ENCODE measurements at regions of chr12 and their contacts with region 1.

Region 1: GRCh38 chr12:22529281-22530060 is 14.9 kb downstream of the C2CD5 start:
- DNase-seq: no peak
- ATAC-seq: peak; percentile 90
- H3K4me3 ChIP-seq: no peak overlapping the region
- H3K27ac ChIP-seq: no peak overlapping the region
- H3K4me1 ChIP-seq: no peaks in the 10 kb centered on the region
- H3K27me3 ChIP-seq: no peaks in the 10 kb centered on the region
- CTCF ChIP-seq: peak; percentile 38 to 53 (median 45); a peak in 4 of 6 replicates
- EP300 ChIP-seq: no peak
- POLR2A ChIP-seq: no peak
- RAD21 ChIP-seq: peak; percentile 30; the same call in 1 of the 2 replicates

Region 2: DNA sequence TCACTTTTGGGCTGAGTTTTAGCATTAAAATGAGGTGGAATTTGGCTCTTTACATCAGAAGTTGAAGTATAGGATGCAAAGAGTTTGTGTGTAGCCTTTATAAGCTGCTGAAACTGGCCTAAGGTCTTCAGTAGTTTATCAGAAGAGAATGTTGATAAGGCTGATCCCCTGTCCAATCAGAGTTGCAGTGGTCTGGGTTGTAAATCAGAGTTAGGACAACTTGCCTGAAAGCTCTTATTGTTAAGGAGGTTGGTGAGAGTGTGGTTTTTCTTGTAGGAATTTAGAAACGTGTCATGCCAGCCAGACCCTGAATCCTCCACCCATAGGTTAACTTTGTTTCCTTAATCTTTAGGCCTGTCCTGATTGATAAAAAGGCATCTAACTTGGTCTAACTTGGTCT is 338.5 kb before region 1 on chr12:
- CTCF ChIA-PET with region 1: no interaction called
- POLR2A ChIA-PET with region 1: no interaction called
- RAD21 ChIA-PET with region 1: no interaction called
- SMC1A ChIA-PET with region 1: no interaction called
- in situ Hi-C with region 1: no loop called
- intact Hi-C with region 1: no loop called
- DNase-seq: no peak
- ATAC-seq: no peak
- H3K4me3 ChIP-seq: no peak overlapping the region
- H3K27ac ChIP-seq: no peak overlapping the region
- H3K4me1 ChIP-seq: no peaks in the 10 kb centered on the region
- H3K27me3 ChIP-seq: no peaks in the 10 kb centered on the region
- CTCF ChIP-seq: no peak
- EP300 ChIP-seq: no peak
- POLR2A ChIP-seq: no peak
- RAD21 ChIP-seq: no peak

Region 3: GRCh38 chr12:22230280-22230794 is 299.1 kb before region 1 on chr12:
- CTCF ChIA-PET with region 1: no interaction called
- POLR2A ChIA-PET with region 1: no interaction called
- RAD21 ChIA-PET with region 1: no interaction called
- SMC1A ChIA-PET with region 1: no interaction called
- in situ Hi-C with region 1: no loop called
- intact Hi-C with region 1: no loop called
- DNase-seq: no peak
- ATAC-seq: no peak
- H3K4me3 ChIP-seq: no peak overlapping the region
- H3K27ac ChIP-seq: no peak overlapping the region
- H3K4me1 ChIP-seq: no peaks in the 10 kb centered on the region
- H3K27me3 ChIP-seq: no peaks in the 10 kb centered on the region
- CTCF ChIP-seq: no peak
- EP300 ChIP-seq: no peak
- POLR2A ChIP-seq: no peak
- RAD21 ChIP-seq: no peak

Region 4: DNA sequence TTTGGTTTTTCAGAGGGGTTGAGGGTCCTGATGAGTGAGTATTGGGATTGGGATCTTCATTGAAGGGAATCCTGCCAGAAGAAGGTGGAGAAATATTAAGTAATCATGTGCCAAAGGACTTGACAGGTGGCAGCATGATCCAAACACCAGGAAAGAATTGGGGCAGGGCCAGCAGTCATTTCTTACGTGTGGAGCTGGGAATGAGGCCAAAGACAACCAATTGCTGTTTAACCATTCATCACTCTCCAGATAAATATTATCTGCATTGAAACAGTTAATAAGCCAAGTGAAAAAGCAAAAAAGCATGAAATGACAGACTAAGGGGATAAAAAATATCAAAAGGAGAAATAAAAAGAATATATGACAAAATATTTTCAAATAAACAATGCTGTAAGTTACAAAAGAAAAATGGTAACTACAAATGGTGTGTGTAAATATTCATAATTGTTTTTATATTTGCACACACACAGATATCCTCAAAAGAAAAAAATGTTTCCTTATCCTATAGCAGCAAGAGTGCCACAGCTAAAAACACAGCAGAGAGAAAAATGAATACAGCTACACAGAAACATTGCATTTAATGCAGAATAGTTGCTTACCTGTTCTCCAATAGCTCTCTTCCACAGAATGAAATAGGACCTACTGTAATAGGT is 11.3 kb before region 1 on chr12:
- CTCF ChIA-PET with region 1: interaction called, 13 read pairs
- POLR2A ChIA-PET with region 1: no interaction called
- RAD21 ChIA-PET with region 1: interaction called, 3 read pairs
- SMC1A ChIA-PET with region 1: interaction called, 4 read pairs
- in situ Hi-C with region 1: no loop called
- intact Hi-C with region 1: no loop called
- DNase-seq: no peak
- ATAC-seq: no peak
- H3K4me3 ChIP-seq: no peak overlapping the region
- H3K27ac ChIP-seq: no peak overlapping the region
- H3K4me1 ChIP-seq: no peaks in the 10 kb centered on the region
- H3K27me3 ChIP-seq: no peaks in the 10 kb centered on the region
- CTCF ChIP-seq: no peak
- EP300 ChIP-seq: no peak
- POLR2A ChIP-seq: no peak
- RAD21 ChIP-seq: no peak

Region 5: DNA sequence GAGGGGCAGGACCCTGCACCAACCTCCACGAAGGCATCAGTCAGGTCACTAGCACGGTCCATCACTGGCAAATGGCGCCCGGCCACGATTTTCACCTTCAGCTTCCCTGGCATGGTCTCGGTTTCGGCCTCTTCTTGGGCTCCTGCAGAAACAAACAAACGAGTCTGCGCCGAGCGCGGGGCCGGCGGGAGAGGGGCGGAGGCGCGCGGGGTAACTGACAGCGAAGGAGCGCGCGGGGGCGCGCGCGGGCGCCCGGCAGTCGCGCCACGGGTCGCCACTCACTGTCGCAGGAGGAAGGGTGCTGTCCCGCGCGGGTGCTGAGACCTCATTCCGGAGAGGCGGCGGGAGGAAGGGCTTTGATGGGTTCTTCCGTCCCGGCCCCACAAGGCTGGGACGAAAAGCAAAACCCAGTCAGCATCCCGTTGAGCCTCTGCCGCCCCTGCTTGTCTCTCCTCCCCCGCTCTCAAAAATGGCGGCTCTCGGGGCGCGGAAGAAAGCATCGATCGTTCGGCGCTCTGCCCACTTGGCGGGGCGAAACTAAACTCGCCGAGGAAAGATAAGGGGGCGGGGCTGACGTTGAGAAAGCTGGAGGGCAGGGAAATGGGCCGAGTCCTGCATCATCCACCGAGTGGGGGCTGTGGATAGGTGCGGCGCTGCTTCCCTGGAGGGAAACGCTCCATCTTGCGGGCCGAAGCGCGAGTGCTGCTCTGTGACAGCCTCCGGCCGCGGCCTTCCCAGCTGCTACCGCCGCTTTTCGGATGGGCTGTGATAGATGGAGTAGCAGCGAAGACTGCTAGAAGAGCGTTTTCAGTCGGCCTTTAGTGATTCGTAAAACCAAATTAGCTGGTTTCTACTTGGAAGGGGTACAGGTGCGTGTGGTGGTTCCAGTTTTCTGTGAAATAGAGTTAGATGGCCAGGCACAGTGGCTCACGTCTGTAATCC is 14.8 kb after region 1 on chr12 and contains the start of gene C2CD5:
- CTCF ChIA-PET with region 1: interaction called, 22 read pairs
- POLR2A ChIA-PET with region 1: interaction called, 3 read pairs
- RAD21 ChIA-PET with region 1: interaction called, 5 read pairs
- SMC1A ChIA-PET with region 1: interaction called, 5 read pairs
- in situ Hi-C with region 1: no loop called
- intact Hi-C with region 1: no loop called
- DNase-seq: peak; percentile 80
- ATAC-seq: peak; percentile 85
- H3K4me3 ChIP-seq: peak within 1 kb of the TSS; percentile 69
- H3K27ac ChIP-seq: peak within 1 kb of the TSS; percentile 84
- H3K4me1 ChIP-seq: peaks cover 7% of the 10 kb centered on the region
- H3K27me3 ChIP-seq: no peaks in the 10 kb centered on the region
- CTCF ChIP-seq: peak; percentile 24 to 34 (median 33); a peak in 4 of 6 replicates
- EP300 ChIP-seq: 0 out of 4 replicates have a peak, but pooled peaks of 1 of the 2 experiments have one; percentile 17
- POLR2A ChIP-seq: peak; percentile 94
- RAD21 ChIP-seq: no peak
- polyA plus RNA-seq, gene C2CD5: 7.7 to 10.1 TPM

Region 6: GRCh38 chr12:22624870-22625761 is 95.6 kb after region 1 on chr12 and contains the start of gene ETNK1:
- CTCF ChIA-PET with region 1: interaction called, 41 read pairs
- POLR2A ChIA-PET with region 1: no interaction called
- RAD21 ChIA-PET with region 1: interaction called, 10 read pairs
- SMC1A ChIA-PET with region 1: interaction called, 33 read pairs
- in situ Hi-C with region 1: no loop called
- intact Hi-C with region 1: no loop called
- DNase-seq: peak; percentile 27
- ATAC-seq: peak; percentile 94
- H3K4me3 ChIP-seq: peak within 1 kb of the TSS; percentile 78
- H3K27ac ChIP-seq: peak within 1 kb of the TSS; percentile 87
- H3K4me1 ChIP-seq: no peaks in the 10 kb centered on the region
- H3K27me3 ChIP-seq: no peaks in the 10 kb centered on the region
- CTCF ChIP-seq: no peak
- EP300 ChIP-seq: no peak
- POLR2A ChIP-seq: peak; percentile 97
- RAD21 ChIP-seq: no peak
- polyA plus RNA-seq, gene ETNK1: 12.3 to 16.3 TPM

Region 7: GRCh38 chr12:22631863-22632463 is 102.5 kb after region 1 on chr12:
- CTCF ChIA-PET with region 1: interaction called, 41 read pairs
- POLR2A ChIA-PET with region 1: no interaction called
- RAD21 ChIA-PET with region 1: interaction called, 10 read pairs
- SMC1A ChIA-PET with region 1: interaction called, 33 read pairs
- in situ Hi-C with region 1: no loop called
- intact Hi-C with region 1: loop called (anchors 2 kb)
- DNase-seq: no peak
- ATAC-seq: peak; percentile 18; the same call in 2 of the 3 replicates
- H3K4me3 ChIP-seq: no peak overlapping the region
- H3K27ac ChIP-seq: no peak overlapping the region
- H3K4me1 ChIP-seq: no peaks in the 10 kb centered on the region
- H3K27me3 ChIP-seq: no peaks in the 10 kb centered on the region
- CTCF ChIP-seq: peak; percentile 38 to 52 (median 51); a peak in 5 of 6 replicates
- EP300 ChIP-seq: no peak
- POLR2A ChIP-seq: no peak
- RAD21 ChIP-seq: peak; percentile 52

Region 8: DNA sequence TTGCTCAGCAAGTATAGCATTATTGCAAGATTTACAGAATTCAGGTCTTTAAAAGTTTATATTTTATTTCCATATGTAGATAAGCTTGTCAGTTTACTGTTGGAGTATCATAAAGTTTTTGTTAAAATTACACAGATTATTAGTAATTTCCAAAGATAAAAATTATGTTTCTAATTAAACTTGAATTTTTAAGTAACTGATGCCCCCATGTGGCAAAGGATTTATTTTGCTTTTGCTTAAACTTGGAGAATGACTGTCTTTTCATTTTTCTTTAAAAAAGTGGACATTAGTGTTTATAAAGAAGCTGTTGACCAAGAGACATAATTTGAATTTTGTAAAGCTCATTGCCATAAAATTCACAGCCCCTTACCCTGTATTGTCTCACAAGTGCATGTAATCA is 141.3 kb after region 1 on chr12:
- CTCF ChIA-PET with region 1: interaction called, 12 read pairs
- POLR2A ChIA-PET with region 1: no interaction called
- RAD21 ChIA-PET with region 1: interaction called, 6 read pairs
- SMC1A ChIA-PET with region 1: interaction called, 6 read pairs
- in situ Hi-C with region 1: no loop called
- intact Hi-C with region 1: no loop called
- DNase-seq: no peak
- ATAC-seq: no peak
- H3K4me3 ChIP-seq: no peak overlapping the region
- H3K27ac ChIP-seq: no peak overlapping the region
- H3K4me1 ChIP-seq: no peaks in the 10 kb centered on the region
- H3K27me3 ChIP-seq: no peaks in the 10 kb centered on the region
- CTCF ChIP-seq: no peak; a peak in 1 of 6 replicates
- EP300 ChIP-seq: no peak
- POLR2A ChIP-seq: no peak
- RAD21 ChIP-seq: peak; percentile 19; the same call in 1 of the 2 replicates

Region 9: DNA sequence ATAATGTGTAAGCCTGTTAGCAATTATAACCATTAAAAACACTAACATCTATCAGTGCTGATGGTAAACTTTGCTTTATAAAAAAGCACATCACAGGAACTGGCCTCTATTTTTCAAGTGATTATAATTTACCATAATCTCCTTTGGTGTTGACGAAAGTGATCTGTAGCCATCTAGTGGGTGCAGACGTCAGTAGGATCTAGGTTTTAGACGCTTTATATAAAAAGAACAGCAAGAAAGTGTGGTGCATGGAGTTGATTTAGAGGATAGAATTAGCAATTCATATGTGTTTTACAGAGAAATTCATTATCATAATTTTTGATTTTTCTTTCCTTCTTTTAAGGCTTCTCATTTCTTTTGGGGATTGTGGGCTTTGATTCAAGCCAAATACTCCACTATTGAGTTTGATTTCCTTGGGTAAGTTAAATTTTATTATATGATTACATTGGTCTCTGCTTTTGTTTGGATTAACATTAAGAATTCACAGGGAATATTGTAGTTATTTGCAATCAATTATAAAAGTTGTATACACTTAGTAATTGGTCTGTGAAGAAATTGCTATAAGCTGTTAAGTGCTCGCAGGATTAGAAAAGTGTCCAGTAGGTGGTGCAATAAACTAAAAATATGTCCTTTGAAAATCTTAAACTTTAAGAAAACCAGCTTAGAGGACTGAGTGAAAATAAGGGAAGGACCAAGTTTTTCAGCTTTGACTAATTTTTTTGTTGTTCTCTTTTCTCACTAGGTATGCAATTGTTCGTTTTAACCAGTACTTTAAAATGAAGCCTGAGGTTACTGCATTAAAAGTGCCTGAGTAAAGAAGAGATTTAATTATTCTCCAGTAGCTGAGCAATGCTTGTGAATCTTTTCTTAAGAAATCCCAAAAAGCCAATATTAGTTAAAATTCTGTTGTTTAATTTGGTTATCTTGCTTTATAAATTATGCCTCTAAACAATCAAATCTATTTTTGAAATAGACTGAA is 155.0 kb after region 1 on chr12:
- CTCF ChIA-PET with region 1: interaction called, 8 read pairs
- POLR2A ChIA-PET with region 1: no interaction called
- RAD21 ChIA-PET with region 1: interaction called, 10 read pairs
- SMC1A ChIA-PET with region 1: interaction called, 5 read pairs
- in situ Hi-C with region 1: no loop called
- intact Hi-C with region 1: no loop called
- DNase-seq: peak; percentile 11
- ATAC-seq: peak; percentile 64
- H3K4me3 ChIP-seq: no peak overlapping the region
- H3K27ac ChIP-seq: no peak overlapping the region
- H3K4me1 ChIP-seq: peaks cover 18% of the 10 kb centered on the region
- H3K27me3 ChIP-seq: no peaks in the 10 kb centered on the region
- CTCF ChIP-seq: peak; percentile 50 to 61 (median 56); a peak in 4 of 6 replicates
- EP300 ChIP-seq: no peak
- POLR2A ChIP-seq: no peak
- RAD21 ChIP-seq: peak; percentile 63